Heart right ventricle (tissue), 16 donors: ENCODE measurements at regions of chr9 and their contacts with region 1.

Region 1: DNA sequence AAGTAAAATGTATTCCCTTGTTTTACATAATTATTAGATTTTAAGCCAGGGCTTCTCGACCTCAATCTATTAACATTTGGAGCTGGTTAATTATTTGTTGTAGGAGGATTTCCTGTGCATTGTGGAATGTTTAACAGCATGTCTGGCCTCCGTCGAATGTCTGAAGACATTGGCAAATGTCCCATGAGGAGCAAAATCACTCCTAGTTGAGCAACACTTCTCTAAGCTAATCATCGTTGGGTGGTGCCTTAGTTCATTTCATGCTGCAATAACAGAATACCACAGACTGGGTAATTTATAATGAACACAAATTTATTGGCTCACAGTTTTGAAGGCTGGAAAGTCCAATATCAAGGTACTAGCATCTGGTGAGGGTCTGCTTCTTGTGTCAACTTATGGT is 13.4 kb upstream of the VPS13A start:
- DNase-seq: no peak
- ATAC-seq: peak in 1 of 8 donors; percentile 16
- H3K4me3 ChIP-seq: no peak overlapping the region
- H3K27ac ChIP-seq: no peak overlapping the region
- H3K4me1 ChIP-seq: peaks cover 0 to 8% (median 0%) of the 10 kb centered on the region in 9 donors
- H3K27me3 ChIP-seq: no peaks in the 10 kb centered on the region
- CTCF ChIP-seq: no peak

Region 2: GRCh38 chr9:76810377-76810957 is 353.4 kb before region 1 on chr9:
- intact Hi-C with region 1: loop called in 1 of 10 experiments (anchors 10 kb)
- DNase-seq: peak in 1 of 2 donors; percentile 25
- ATAC-seq: peak in 6 of 8 donors; percentile 46 to 83 (median 58)
- H3K4me3 ChIP-seq: no peak overlapping the region
- H3K27ac ChIP-seq: no peak overlapping the region
- H3K4me1 ChIP-seq: no peaks in the 10 kb centered on the region
- H3K27me3 ChIP-seq: peaks cover 0 to 37% (median 23%) of the 10 kb centered on the region in 7 donors
- CTCF ChIP-seq: peak; percentile 36 to 80 (median 70)

Region 3: GRCh38 chr9:77194423-77194822 is 30.5 kb after region 1 on chr9:
- intact Hi-C with region 1: no loop called
- DNase-seq: no peak
- ATAC-seq: peak in 1 of 8 donors; percentile 20
- H3K4me3 ChIP-seq: no peak overlapping the region
- H3K27ac ChIP-seq: no peak overlapping the region
- H3K4me1 ChIP-seq: no peaks in the 10 kb centered on the region
- H3K27me3 ChIP-seq: no peaks in the 10 kb centered on the region
- CTCF ChIP-seq: no peak

Region 4: GRCh38 chr9:77215874-77216273 is 52.0 kb after region 1 on chr9:
- intact Hi-C with region 1: loop called in 2 of 10 experiments (anchors 5 to 10 kb)
- DNase-seq: no peak
- ATAC-seq: peak in 2 of 8 donors; percentile 49 to 55
- H3K4me3 ChIP-seq: no peak overlapping the region
- H3K27ac ChIP-seq: no peak overlapping the region
- H3K4me1 ChIP-seq: peaks cover 0 to 4% (median 0%) of the 10 kb centered on the region in 9 donors
- H3K27me3 ChIP-seq: no peaks in the 10 kb centered on the region
- CTCF ChIP-seq: peak in 4 of 9 donors; percentile 34 to 39 (median 34)

Region 5: GRCh38 chr9:77224746-77225312 is 60.9 kb after region 1 on chr9:
- intact Hi-C with region 1: loop called in 1 of 10 experiments (anchors 10 kb)
- DNase-seq: no peak
- ATAC-seq: no peak
- H3K4me3 ChIP-seq: no peak overlapping the region
- H3K27ac ChIP-seq: no peak overlapping the region
- H3K4me1 ChIP-seq: no peaks in the 10 kb centered on the region
- H3K27me3 ChIP-seq: no peaks in the 10 kb centered on the region
- CTCF ChIP-seq: no peak

Region 6: DNA sequence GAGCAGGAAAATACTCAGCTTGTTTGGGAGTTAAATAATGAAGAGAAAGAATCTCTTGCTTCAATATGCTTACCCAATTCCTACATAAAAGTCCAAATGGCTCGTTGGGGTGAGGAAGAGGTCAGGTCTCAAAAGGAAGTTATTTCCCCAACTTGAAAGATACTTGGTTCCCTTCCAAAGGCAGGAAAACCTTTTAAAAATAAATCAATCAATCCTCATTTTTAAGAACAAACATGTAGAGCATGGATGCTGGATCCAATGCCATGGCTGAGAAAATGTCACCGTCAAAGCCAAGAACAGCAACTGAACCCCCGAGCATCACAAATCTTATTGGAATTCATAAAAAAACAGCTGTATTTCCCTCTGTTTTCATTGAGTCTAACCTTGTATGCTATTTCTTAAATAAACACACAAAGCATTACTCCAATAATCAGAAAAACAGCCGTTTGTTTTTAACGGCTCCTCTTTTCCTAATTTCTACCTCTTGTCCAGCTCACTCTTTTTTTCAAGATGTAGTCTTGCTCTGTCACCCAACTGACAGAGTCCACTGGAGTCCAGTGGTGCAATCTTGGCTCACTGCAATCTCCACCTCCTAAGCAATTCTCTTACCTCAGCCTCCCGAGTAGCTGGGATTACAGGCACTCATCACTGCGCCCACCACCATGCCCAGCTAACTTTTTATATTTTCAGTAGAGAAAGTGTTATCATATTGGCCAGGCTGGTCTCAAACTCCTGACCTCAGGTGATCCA is 343.5 kb after region 1 on chr9:
- intact Hi-C with region 1: no loop called
- DNase-seq: no peak
- ATAC-seq: peak in 7 of 8 donors; percentile 32 to 73 (median 57)
- H3K4me3 ChIP-seq: no peak overlapping the region
- H3K27ac ChIP-seq: peak overlapping the region in 8 of 10 donors; percentile 7 to 65 (median 37)
- H3K4me1 ChIP-seq: peaks cover 0 to 43% (median 10%) of the 10 kb centered on the region in 9 donors
- H3K27me3 ChIP-seq: no peaks in the 10 kb centered on the region
- CTCF ChIP-seq: no peak